Adrenal gland (tissue), 19 donors: ENCODE measurements at regions of chr2 and their contacts with region 1.

Region 1: GRCh38 chr2:234288974-234289455 is 207.9 kb downstream of the ARL4C start:
- DNase-seq: peak; percentile 49 to 86 (median 64)
- H3K4me3 ChIP-seq: no peak overlapping the region
- H3K27ac ChIP-seq: no peak overlapping the region
- H3K4me1 ChIP-seq: peaks cover 0 to 22% of the 10 kb centered on the region in 2 donors
- H3K27me3 ChIP-seq: no peaks in the 10 kb centered on the region
- CTCF ChIP-seq: peak; percentile 51 to 79 (median 72)
- POLR2A ChIP-seq: no peak

Region 2: GRCh38 chr2:234025466-234026185 is 263.4 kb before region 1 on chr2:
- intact Hi-C with region 1: no loop called
- DNase-seq: no peak
- H3K4me3 ChIP-seq: peak overlapping the region in 1 of 4 donors; percentile 15
- H3K27ac ChIP-seq: no peak overlapping the region
- H3K4me1 ChIP-seq: no peaks in the 10 kb centered on the region
- H3K27me3 ChIP-seq: no peaks in the 10 kb centered on the region
- CTCF ChIP-seq: no peak
- POLR2A ChIP-seq: no peak

Region 3: GRCh38 chr2:234146087-234146826 is 142.8 kb before region 1 on chr2:
- intact Hi-C with region 1: loop called in 1 of 2 experiments (anchors 10 kb)
- DNase-seq: peak in 5 of 7 donors; percentile 16 to 63 (median 27)
- H3K4me3 ChIP-seq: no peak overlapping the region
- H3K27ac ChIP-seq: peak overlapping the region in 1 of 5 donors; percentile 34
- H3K4me1 ChIP-seq: no peaks in the 10 kb centered on the region
- H3K27me3 ChIP-seq: no peaks in the 10 kb centered on the region
- CTCF ChIP-seq: no peak
- POLR2A ChIP-seq: no peak

Region 4: GRCh38 chr2:234169187-234169570 is 119.8 kb before region 1 on chr2:
- intact Hi-C with region 1: no loop called
- DNase-seq: peak in 3 of 7 donors; percentile 8 to 60 (median 24)
- H3K4me3 ChIP-seq: no peak overlapping the region
- H3K27ac ChIP-seq: no peak overlapping the region
- H3K4me1 ChIP-seq: no peaks in the 10 kb centered on the region
- H3K27me3 ChIP-seq: no peaks in the 10 kb centered on the region
- CTCF ChIP-seq: no peak
- POLR2A ChIP-seq: no peak

Region 5: DNA sequence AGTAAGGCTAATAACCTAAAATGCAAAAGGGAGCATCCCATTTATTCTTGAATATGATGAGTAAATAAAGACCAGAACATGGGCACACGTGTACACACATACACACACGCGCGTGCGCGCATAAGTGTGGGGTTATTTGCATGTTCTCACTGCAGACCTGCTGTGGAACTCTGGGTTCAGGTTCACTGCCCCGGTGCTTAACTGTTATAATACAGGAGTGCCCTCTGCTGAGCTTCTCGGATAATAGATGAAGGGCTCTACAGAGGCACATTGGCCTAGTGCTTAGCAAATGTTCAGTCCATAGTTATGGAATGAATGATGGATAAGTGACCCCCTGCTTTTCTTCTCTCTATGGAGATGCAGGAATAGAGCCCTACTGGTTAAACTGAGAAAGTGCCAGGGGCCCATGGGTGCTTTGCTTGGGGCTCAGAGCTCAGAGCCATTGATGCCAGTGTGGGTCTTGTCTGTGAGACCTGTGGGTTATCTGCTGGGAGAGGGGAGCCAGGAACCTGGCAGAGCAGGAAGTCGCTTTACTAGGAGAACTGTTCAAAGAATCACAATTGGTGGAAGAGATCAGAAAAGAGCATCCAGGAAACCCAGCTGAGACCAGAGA is 211.5 kb after region 1 on chr2:
- intact Hi-C with region 1: loop called in 1 of 2 experiments (anchors 10 kb)
- DNase-seq: peak; percentile 33 to 78 (median 42)
- H3K4me3 ChIP-seq: no peak overlapping the region
- H3K27ac ChIP-seq: no peak overlapping the region
- H3K4me1 ChIP-seq: no peaks in the 10 kb centered on the region
- H3K27me3 ChIP-seq: peaks cover 8% of the 10 kb centered on the region
- CTCF ChIP-seq: peak; percentile 8 to 65 (median 52)
- POLR2A ChIP-seq: no peak

Region 6: GRCh38 chr2:234940527-234940926 is 651.5 kb after region 1 on chr2:
- intact Hi-C with region 1: no loop called
- DNase-seq: no peak
- H3K4me3 ChIP-seq: no peak overlapping the region
- H3K27ac ChIP-seq: no peak overlapping the region
- H3K4me1 ChIP-seq: no peaks in the 10 kb centered on the region
- H3K27me3 ChIP-seq: no peaks in the 10 kb centered on the region
- CTCF ChIP-seq: no peak
- POLR2A ChIP-seq: no peak